OCI-LY7 (cell line): ENCODE measurements at regions of chr15 and their contacts with region 1.

Region 1: GRCh38 chr15:74438721-74439316 is 5.1 kb upstream of the SEMA7A start:
- DNase-seq: peak; percentile 84
- H3K4me3 ChIP-seq: no peak overlapping the region
- H3K27ac ChIP-seq: no peak overlapping the region
- H3K4me1 ChIP-seq: peaks cover 10% of the 10 kb centered on the region
- CTCF ChIP-seq: peak; percentile 98

Region 2: GRCh38 chr15:74364941-74365515 is 73.8 kb before region 1 on chr15:
- CTCF ChIA-PET with region 1: no interaction called
- POLR2A ChIA-PET with region 1: no interaction called
- intact Hi-C with region 1: no loop called
- DNase-seq: no peak
- H3K4me3 ChIP-seq: no peak overlapping the region
- H3K27ac ChIP-seq: no peak overlapping the region
- H3K4me1 ChIP-seq: no peaks in the 10 kb centered on the region
- CTCF ChIP-seq: no peak

Region 3: DNA sequence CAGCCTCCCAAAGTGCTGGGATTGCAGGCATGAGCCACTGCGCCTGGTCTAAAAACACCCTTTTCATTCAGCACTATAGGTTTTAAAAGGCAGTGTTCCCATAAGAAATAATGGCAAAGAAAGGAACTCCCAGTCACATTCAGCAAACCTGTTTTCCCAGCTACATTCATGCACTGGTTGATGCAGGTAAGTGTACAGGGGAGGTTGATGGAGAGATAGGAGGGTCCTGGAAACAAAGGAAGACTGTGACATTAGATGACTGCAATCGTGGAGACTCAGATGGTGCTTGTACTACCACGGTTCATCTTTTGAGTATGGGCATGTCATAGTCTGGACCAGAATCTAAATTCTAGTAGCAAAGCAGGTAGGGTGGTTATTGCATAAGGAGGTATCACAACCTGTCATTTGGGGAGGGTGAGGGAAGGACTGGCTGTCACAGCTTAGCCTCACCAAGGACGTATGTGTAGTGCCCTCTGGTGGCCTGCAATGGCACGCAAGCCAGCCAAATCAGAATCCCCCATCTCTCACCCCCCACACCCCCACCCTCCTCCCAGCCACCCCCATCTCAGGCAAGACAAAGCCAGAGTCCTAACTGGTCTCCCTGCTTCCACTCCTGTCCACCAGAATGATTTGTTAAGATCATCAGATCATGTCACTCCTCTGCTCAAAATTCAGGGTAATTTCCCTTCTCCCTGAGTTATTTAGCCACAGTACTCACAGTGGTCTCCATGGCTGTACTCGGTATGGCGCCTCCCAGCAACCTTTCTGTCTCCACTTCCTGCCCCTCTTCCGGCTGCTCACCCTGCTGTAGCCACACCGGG is 50.9 kb after region 1 on chr15:
- CTCF ChIA-PET with region 1: no interaction called
- POLR2A ChIA-PET with region 1: no interaction called
- intact Hi-C with region 1: loop called (anchors 1 kb)
- DNase-seq: peak; percentile 82
- H3K4me3 ChIP-seq: peak overlapping the region; percentile 50
- H3K27ac ChIP-seq: peak overlapping the region; percentile 35
- H3K4me1 ChIP-seq: peaks cover 6% of the 10 kb centered on the region
- CTCF ChIP-seq: peak; percentile 82